AG04449 (cell line): ENCODE measurements at regions of chr5 and their contacts with region 1.

Region 1: DNA sequence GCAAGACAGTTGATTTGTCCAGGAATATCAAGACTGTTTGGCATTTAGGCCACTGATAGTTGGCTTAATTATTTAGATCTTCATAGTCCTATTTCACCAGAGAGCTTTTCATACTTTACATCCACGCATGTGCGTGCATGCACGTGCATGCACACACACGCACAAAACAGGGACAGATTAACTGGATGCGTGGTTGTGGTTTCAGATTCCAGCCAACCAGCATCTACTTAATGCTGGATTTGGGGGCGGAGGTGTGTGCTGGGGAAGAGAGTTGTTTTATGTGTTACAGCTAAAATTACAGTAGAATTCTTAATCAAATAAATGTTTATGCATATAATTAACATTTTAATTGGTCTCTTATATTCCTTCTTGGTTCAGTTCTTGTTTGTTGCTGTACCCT is 7.3 kb downstream of the RNF14 start:
- DNase-seq: no peak
- H3K4me3 ChIP-seq: no peak overlapping the region
- CTCF ChIP-seq: no peak

Region 2: DNA sequence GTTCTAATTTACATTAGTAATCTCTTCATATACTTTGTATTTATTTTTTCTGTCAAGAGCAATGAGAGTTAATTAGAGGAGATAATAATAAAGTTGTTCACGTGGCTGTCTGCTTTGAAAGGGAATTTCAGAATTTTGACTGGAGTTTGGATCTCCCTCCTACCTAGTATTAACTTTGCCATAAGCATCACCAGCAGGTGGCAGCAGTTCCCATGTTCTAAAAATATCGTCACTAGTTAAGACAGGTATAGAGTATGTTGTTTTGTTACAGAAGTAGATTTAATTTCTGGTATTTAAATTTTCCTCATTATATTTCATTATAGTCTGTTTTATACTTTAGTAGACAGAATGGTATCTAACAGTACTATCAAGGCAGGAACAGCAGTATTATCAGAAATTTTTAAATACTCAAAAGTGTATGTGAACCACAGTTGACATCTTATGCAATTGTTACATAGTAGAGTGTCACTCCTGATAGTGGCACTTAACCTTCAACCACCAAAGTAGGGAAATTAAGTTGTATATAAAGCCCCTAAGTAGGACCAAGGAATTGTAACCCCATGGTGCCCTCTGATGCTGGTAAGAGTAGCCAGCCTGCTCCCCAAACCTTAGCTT is 16.3 kb after region 1 on chr5:
- CTCF ChIA-PET with region 1: interaction called, 70 read pairs
- POLR2A ChIA-PET with region 1: no interaction called
- DNase-seq: no peak
- H3K4me3 ChIP-seq: no peak overlapping the region
- CTCF ChIP-seq: peak; percentile 67